ENCODE measurements at regions of chr6 and their contacts with region 1.

Region 1: DNA sequence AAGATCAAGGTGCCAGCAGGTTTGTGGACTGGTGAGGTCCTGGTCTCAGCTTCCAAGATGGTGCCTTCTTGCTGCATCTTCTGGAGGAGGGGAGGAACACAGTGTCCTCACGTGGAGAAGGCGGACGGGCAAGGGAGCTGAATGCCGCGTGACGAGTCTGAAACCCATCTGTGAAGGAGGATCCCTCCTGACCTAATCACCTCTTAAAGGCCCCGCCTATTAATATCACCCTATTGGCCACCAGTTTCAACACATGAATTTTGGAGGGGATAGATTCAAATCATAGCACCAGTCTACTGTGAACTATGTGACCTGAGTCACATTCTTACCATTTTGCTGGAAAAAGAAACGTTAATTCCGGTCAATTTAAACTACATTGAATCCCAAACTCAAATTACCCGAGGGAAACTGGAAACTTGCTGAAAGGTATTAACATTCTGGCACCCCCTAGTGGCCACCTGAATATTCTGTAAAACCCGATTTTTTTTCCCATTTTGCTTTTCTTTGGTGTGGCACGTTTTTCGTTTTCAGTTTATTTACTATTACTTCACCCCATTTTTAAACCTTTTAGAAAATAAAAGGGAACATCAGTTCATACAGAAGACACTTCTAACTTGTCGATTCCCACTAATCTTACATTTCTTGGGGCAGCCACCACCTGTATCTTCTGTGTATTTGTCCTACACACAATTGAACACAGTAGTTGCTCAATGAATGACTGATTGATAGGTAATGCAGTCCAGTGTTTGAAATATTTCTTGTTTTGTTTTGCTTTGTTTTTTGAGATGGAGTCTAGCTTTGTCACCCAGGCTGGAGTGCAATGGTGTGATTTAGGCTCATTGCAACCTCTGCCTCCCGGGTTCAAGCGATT is 17.9 kb upstream of the CCDC170 start:
- DNase-seq: no peak
- H3K4me3 ChIP-seq: no peak overlapping the region; the same call in 1 of the 2 replicates
- CTCF ChIP-seq: peak; percentile 45

Region 2: GRCh38 chr6:151440930-151441329 is 35.0 kb before region 1 on chr6:
- CTCF ChIA-PET with region 1: interaction called, 67 read pairs
- POLR2A ChIA-PET with region 1: interaction called, 4 read pairs
- DNase-seq: no peak
- H3K4me3 ChIP-seq: no peak overlapping the region
- CTCF ChIP-seq: peak; percentile 26

Region 3: GRCh38 chr6:151461673-151462072 is 14.2 kb before region 1 on chr6:
- CTCF ChIA-PET with region 1: interaction called, 18 read pairs
- POLR2A ChIA-PET with region 1: no interaction called
- DNase-seq: no peak
- H3K4me3 ChIP-seq: no peak overlapping the region
- CTCF ChIP-seq: no peak

Region 4: GRCh38 chr6:151493804-151494234 is 17.9 kb after region 1 on chr6 and contains the start of gene CCDC170:
- CTCF ChIA-PET with region 1: interaction called, 17 read pairs
- POLR2A ChIA-PET with region 1: no interaction called
- DNase-seq: no peak
- H3K4me3 ChIP-seq: peak within 1 kb of the TSS; percentile 65
- CTCF ChIP-seq: no peak

Region 5: DNA sequence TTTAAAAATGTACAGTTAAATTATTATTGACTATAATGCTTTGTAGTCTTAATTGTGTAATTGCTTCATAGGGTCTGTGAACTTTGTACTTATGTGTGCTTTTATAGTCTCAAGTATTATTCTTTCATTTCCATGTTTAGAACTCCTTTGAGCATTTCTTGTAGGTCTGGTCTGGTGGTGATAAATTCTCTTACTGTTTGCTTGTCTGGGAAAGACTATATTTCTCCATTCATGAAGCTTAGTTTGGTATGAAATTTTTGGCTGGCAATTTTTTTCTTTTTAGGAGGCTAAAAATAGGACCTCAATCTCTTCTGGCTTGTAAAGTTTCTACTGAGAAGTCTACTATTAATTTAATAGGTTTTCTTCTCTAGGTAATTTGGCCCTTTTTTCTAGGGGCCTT is 85.3 kb after region 1 on chr6:
- CTCF ChIA-PET with region 1: no interaction called
- POLR2A ChIA-PET with region 1: no interaction called
- DNase-seq: no peak
- H3K4me3 ChIP-seq: no peak overlapping the region
- CTCF ChIP-seq: no peak

Measured in AG04449 (cell line).